OCI-LY7 (cell line): ENCODE measurements at regions of chr21 and their contacts with region 1.

Region 1: DNA sequence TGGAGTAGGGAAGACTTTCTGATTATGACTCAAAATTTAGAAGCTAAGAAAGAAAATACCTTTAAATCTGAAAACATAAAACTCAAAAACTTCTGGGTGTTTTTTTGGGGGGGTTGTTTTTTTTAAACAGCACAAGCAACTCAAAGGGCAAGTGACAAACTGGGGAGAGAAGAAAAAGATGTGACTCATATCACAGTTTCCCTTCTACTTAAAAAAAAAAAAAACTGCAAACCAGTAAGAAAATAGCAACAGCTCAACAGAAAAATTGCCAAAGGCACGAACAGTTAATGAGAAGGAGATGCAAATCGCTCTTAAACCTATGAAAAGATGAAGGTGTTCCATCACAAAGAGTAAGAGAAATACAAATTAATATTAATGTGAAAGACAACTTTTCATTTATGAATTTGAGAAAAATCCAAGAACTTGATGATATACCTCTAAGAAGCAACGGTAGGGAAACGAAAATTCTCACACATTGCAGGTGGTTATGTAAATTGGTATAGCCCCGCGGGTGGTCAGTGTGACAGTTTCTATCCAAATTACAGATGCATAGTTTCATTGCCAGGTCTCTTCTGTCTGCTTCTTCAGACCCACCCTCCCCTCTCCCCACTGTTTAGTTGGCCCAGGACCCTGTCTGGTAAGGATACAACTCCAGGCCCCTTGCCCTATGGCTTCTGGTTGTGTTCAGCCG is 9.0 kb downstream of the IFNAR2 start:
- DNase-seq: peak; percentile 86
- H3K4me3 ChIP-seq: peak overlapping the region; percentile 62
- H3K27ac ChIP-seq: peak overlapping the region; percentile 96
- H3K4me1 ChIP-seq: peaks cover 82% of the 10 kb centered on the region
- CTCF ChIP-seq: no peak

Region 2: GRCh38 chr21:33069976-33070811 is 168.5 kb before region 1 on chr21 and contains the start of gene OLIG1:
- CTCF ChIA-PET with region 1: no interaction called
- POLR2A ChIA-PET with region 1: no interaction called
- intact Hi-C with region 1: no loop called
- DNase-seq: no peak
- H3K4me3 ChIP-seq: no peak within 1 kb of the TSS
- H3K27ac ChIP-seq: no peak within 1 kb of the TSS
- H3K4me1 ChIP-seq: no peaks in the 10 kb centered on the region
- CTCF ChIP-seq: no peak
- total RNA-seq, gene OLIG1: not detected in 2 replicates

Region 3: DNA sequence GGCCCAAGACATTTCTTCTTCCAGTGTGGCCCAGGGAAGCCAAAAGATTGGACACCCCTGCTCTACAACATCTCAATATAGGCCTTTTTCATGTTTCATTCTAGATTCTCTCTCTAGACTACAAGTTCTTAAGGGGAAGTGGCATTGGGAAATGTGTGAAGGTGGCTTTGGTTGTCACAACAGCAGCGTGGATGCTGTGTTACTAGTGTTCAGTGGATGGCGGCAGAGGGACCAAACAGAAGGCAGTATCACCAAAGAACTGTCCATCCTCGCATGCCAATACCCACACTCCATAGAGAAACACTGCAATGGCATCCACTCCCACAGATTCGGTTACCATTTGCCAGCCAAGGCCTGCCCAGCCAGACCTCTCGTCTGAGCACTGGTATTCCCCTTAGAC is 33.2 kb before region 1 on chr21:
- CTCF ChIA-PET with region 1: no interaction called
- POLR2A ChIA-PET with region 1: interaction called, 8 read pairs
- intact Hi-C with region 1: loop called (anchors 2 kb)
- DNase-seq: peak; percentile 74
- H3K4me3 ChIP-seq: peak overlapping the region; percentile 56
- H3K27ac ChIP-seq: peak overlapping the region; percentile 88
- H3K4me1 ChIP-seq: peaks cover 68% of the 10 kb centered on the region
- CTCF ChIP-seq: peak; percentile 61

Region 4: DNA sequence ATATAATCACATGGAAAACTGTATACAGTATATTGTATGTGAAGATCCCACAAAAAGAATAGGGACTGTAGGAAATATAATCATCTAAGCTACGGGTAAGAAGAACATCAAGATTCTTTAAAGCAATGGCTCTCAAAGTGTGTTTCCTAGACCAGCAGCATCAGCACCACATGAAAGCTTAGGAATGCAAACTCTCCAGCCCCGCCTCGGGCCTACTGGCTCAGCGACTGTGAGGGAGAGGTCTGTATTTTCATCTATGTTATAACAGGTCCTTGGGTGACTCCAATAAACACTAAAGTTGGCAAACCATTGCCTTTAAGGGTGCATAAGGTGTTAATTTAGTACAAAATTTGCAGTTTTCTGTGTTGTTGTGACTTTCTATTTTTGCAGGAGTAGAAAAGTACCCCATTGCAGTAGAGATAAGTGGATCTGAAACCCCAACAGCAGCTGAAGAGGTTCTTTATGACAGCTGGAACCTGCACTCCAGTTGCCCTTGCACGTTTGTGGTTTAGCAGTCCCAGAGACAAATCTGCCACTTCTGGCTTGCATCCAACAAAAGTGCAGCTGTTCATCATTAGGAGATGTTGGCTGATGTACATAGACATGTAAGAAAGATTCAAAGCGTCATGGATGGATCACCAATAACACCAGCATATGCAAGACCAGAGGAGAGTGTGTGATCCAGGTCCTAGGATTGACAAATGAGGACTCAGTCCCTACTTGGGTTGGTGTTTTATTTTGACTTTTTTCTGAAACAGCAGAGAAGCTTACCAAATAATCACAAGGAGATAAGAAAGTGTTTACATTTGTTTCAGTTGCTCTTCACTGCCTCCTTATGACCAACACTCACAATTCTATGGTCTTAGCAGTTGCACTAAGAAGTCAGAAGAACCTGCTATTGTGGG is 70.1 kb after region 1 on chr21:
- CTCF ChIA-PET with region 1: no interaction called
- POLR2A ChIA-PET with region 1: interaction called, 4 read pairs
- intact Hi-C with region 1: loop called (anchors 2 kb)
- DNase-seq: peak; percentile 100
- H3K4me3 ChIP-seq: peak overlapping the region; percentile 42
- H3K27ac ChIP-seq: peak overlapping the region; percentile 99
- H3K4me1 ChIP-seq: peaks cover 100% of the 10 kb centered on the region
- CTCF ChIP-seq: peak; percentile 80